Caco-2 (cell line): ENCODE measurements at regions of chr13 and their contacts with region 1.

Region 1: GRCh38 chr13:46721054-46721453 is 75.9 kb downstream of the ESD start:
- DNase-seq: peak in 1 of 2 experiments; percentile 53
- H3K4me3 ChIP-seq: no peak overlapping the region
- H3K4me3 Mint-ChIP-seq: no peak overlapping the region
- H3K27ac Mint-ChIP-seq: no peak overlapping the region
- H3K4me1 ChIP-seq: peaks cover 29% of the 10 kb centered on the region
- H3K4me1 Mint-ChIP-seq: peaks cover 14% of the 10 kb centered on the region
- H3K27me3 ChIP-seq: no peaks in the 10 kb centered on the region
- H3K27me3 Mint-ChIP-seq: no peaks in the 10 kb centered on the region
- CTCF ChIP-seq: peak; percentile 61 to 74

Region 2: GRCh38 chr13:46668302-46668720 is 52.7 kb before region 1 on chr13:
- CTCF ChIA-PET with region 1: no interaction called
- POLR2A ChIA-PET with region 1: no interaction called
- intact Hi-C with region 1: loop called (anchors 5 kb)
- DNase-seq: no peak
- H3K4me3 ChIP-seq: no peak overlapping the region
- H3K4me3 Mint-ChIP-seq: no peak overlapping the region
- H3K27ac Mint-ChIP-seq: no peak overlapping the region
- H3K4me1 ChIP-seq: peaks cover 41% of the 10 kb centered on the region
- H3K4me1 Mint-ChIP-seq: peaks cover 37% of the 10 kb centered on the region
- H3K27me3 ChIP-seq: no peaks in the 10 kb centered on the region
- H3K27me3 Mint-ChIP-seq: no peaks in the 10 kb centered on the region
- CTCF ChIP-seq: no peak

Region 3: DNA sequence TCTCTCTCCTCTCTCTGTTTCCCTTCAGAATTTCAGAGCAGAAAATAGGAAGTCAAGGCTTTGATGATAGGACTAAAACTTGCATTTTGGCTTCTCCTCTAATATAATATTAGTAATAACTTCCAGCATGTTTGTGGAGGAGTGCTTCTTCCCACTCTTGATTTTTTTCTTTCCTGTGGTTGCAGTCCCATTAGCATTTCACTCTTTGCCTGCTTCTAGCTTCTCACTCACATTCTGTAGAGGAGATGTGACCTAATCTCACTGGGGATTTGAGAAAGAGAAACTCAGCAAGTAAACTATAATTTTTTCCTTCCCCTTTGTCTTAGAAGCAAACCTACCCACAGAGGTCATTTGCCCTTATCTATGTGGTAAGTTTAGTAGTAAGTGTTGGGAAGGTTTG is 345.2 kb after region 1 on chr13:
- CTCF ChIA-PET with region 1: no interaction called
- POLR2A ChIA-PET with region 1: no interaction called
- intact Hi-C with region 1: no loop called
- DNase-seq: no peak
- H3K4me3 ChIP-seq: no peak overlapping the region
- H3K4me3 Mint-ChIP-seq: no peak overlapping the region
- H3K27ac Mint-ChIP-seq: no peak overlapping the region
- H3K4me1 ChIP-seq: no peaks in the 10 kb centered on the region
- H3K4me1 Mint-ChIP-seq: no peaks in the 10 kb centered on the region
- H3K27me3 ChIP-seq: no peaks in the 10 kb centered on the region
- H3K27me3 Mint-ChIP-seq: peaks cover 20% of the 10 kb centered on the region
- CTCF ChIP-seq: no peak